ENCODE measurements at regions of chr6 and their contacts with region 1.

Region 1: DNA sequence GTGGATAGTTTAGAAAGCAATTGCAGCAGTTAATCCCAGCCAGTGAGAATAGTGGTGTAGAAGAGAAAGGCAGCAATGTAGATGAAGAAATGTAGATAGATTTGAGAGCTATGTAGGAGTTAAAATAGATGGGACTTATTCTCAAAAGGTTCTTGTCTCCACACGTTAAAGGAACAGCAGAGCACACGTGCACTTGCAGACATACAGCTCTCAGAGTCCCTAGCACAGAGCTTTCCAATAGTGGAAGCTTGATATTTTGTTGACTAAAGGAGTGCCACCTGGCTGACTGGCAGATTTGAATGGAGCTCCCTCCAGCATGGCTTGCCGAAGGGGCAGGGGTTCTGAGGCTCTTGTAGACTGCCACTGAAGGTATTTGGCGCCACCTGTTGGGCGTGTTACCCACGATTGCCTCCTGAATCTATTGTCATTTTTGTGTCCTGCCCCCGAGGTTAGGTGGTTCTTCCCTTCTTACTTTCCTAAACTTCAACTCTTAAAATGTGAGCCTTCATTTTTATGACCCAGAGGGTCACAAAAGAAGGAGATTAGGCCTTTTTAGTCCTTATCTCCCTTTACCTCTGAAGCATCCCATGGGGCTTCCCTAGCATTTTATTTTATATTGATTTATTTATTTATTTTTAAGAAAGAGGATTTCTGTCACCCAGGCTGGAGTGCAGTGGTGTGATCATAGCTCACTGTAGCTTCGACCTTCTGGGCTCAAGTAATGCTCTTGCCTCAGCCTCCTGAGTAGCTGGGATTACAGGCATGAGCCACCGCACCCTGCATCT is 16.4 kb downstream of the BRD2 start:
- DNase-seq: peak; percentile 95
- H3K4me3 Mint-ChIP-seq: no peak overlapping the region
- H3K27ac Mint-ChIP-seq: peak overlapping the region; percentile 12
- H3K4me1 Mint-ChIP-seq: peaks cover 20% of the 10 kb centered on the region
- H3K27me3 Mint-ChIP-seq: peaks cover 24% of the 10 kb centered on the region

Region 2: GRCh38 chr6:32838114-32838958 is 146.5 kb before region 1 on chr6 and contains the start of gene TAP2:
- CTCF ChIA-PET with region 1: interaction called, 22 read pairs
- DNase-seq: peak; percentile 98
- H3K4me3 Mint-ChIP-seq: peak within 1 kb of the TSS; percentile 85
- H3K27ac Mint-ChIP-seq: peak within 1 kb of the TSS; percentile 100
- H3K4me1 Mint-ChIP-seq: peaks cover 86% of the 10 kb centered on the region
- H3K27me3 Mint-ChIP-seq: no peaks in the 10 kb centered on the region

Region 3: DNA sequence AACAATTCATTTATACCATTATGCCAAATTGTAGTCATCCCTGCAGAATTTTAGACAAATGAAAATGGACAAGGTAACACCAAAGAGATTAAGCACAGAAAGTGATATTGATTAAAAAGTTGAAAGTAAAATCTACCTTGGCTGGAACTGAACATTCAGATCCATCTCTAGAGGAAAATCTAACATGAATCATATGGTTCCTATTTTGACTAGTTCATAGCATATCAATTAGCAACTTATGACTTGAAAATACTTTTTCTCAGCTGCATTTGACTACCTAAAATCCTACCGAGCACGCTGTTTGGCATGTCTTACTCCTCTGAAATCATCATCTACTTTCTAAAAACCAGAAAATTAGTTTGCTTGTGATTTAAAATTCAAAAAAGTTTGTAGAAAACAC is 108.2 kb before region 1 on chr6:
- CTCF ChIA-PET with region 1: interaction called, 30 read pairs
- DNase-seq: no peak
- H3K4me3 Mint-ChIP-seq: no peak overlapping the region
- H3K27ac Mint-ChIP-seq: no peak overlapping the region
- H3K4me1 Mint-ChIP-seq: no peaks in the 10 kb centered on the region
- H3K27me3 Mint-ChIP-seq: peaks cover 16% of the 10 kb centered on the region

Region 4: DNA sequence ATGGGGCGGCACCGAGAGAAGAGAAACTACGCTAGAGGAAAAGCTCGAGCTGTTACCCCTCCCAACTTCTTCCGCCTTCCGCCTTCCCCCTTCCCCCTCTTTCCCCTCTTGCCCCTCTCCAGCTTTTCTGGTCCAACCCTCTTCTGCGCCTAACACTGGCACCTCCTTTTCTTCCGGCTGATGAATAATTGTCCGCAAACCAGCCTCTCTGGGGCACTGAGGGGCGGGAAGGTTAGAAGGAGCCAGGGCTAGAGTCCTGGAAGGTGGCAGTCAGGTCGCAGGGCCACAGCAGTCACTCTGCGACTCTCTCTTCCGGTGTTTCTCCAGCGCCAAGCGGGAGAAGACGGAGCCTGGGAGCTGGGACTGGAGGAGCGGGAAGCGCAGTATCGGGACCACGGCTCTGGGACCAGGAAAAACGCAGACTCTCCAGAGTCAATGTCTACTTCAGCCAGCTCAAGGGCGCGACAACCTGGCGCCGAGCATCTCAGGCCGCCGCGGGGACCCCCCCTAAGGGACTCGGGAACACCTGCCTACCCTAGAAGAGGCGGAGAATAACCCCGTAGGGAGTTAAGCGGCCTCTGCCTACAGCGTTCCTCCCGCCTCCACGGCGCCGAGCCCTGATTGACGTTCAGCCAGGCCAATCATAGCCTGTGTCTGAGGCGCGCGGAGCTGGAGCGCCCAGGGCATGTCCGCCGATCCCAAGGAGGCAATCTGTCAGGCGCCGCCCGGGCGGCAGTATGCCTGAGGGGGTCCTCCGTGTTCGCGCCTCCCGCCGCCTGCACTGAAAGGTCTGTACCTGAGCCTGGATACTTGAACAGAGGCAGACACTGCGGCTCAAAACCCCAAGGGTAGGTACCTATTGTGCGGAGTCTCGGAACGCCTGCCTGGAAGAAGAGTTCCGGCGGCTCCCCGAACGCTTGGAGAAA is 90.5 kb before region 1 on chr6:
- CTCF ChIA-PET with region 1: interaction called, 18 read pairs
- DNase-seq: peak; percentile 96
- H3K4me3 Mint-ChIP-seq: peak overlapping the region; percentile 99
- H3K27ac Mint-ChIP-seq: peak overlapping the region; percentile 91
- H3K4me1 Mint-ChIP-seq: peaks cover 46% of the 10 kb centered on the region
- H3K27me3 Mint-ChIP-seq: peaks cover 12% of the 10 kb centered on the region

Region 5: GRCh38 chr6:32940656-32941213 is 44.1 kb before region 1 on chr6 and contains the start of gene HLA-DMB:
- CTCF ChIA-PET with region 1: interaction called, 140 read pairs
- DNase-seq: peak; percentile 64
- H3K4me3 Mint-ChIP-seq: peak within 1 kb of the TSS; percentile 83
- H3K27ac Mint-ChIP-seq: peak within 1 kb of the TSS; percentile 97
- H3K4me1 Mint-ChIP-seq: peaks cover 66% of the 10 kb centered on the region
- H3K27me3 Mint-ChIP-seq: peaks cover 6% of the 10 kb centered on the region

Region 6: GRCh38 chr6:32952817-32953739 is 31.7 kb before region 1 on chr6 and contains the start of gene HLA-DMA:
- CTCF ChIA-PET with region 1: interaction called, 66 read pairs
- DNase-seq: peak; percentile 86
- H3K4me3 Mint-ChIP-seq: peak within 1 kb of the TSS; percentile 68
- H3K27ac Mint-ChIP-seq: peak within 1 kb of the TSS; percentile 75
- H3K4me1 Mint-ChIP-seq: peaks cover 52% of the 10 kb centered on the region
- H3K27me3 Mint-ChIP-seq: no peaks in the 10 kb centered on the region

Measured in activated naive CD4-positive, alpha-beta T cell treated with anti-CD3 and anti-CD28 coated beads, Interleukin-2, amount 10 ng/mL, durations not matched to agents 7 days and 5 days (primary cell).